Panc1 (cell line): ENCODE measurements at regions of chr11 and their contacts with region 1.

Region 1: GRCh38 chr11:17063171-17064002 is 14.1 kb downstream of the RPS13 start:
- DNase-seq: peak; percentile 28
- ATAC-seq: peak; percentile 96
- H3K4me3 ChIP-seq: no peak overlapping the region
- H3K27ac ChIP-seq: no peak overlapping the region
- H3K4me1 ChIP-seq: no peaks in the 10 kb centered on the region
- H3K27me3 ChIP-seq: no peaks in the 10 kb centered on the region
- CTCF ChIP-seq: peak; percentile 90

Region 2: GRCh38 chr11:16785520-16786128 is 277.8 kb before region 1 on chr11:
- CTCF ChIA-PET with region 1: interaction called, 3 read pairs
- POLR2A ChIA-PET with region 1: no interaction called
- in situ Hi-C with region 1: no loop called
- intact Hi-C with region 1: loop called (anchors 10 kb)
- DNase-seq: no peak
- ATAC-seq: peak; percentile 84
- H3K4me3 ChIP-seq: no peak overlapping the region
- H3K27ac ChIP-seq: no peak overlapping the region
- H3K4me1 ChIP-seq: peaks cover 4% of the 10 kb centered on the region; the same call in 1 of the 2 replicates
- H3K27me3 ChIP-seq: no peaks in the 10 kb centered on the region
- CTCF ChIP-seq: peak; percentile 91

Region 3: DNA sequence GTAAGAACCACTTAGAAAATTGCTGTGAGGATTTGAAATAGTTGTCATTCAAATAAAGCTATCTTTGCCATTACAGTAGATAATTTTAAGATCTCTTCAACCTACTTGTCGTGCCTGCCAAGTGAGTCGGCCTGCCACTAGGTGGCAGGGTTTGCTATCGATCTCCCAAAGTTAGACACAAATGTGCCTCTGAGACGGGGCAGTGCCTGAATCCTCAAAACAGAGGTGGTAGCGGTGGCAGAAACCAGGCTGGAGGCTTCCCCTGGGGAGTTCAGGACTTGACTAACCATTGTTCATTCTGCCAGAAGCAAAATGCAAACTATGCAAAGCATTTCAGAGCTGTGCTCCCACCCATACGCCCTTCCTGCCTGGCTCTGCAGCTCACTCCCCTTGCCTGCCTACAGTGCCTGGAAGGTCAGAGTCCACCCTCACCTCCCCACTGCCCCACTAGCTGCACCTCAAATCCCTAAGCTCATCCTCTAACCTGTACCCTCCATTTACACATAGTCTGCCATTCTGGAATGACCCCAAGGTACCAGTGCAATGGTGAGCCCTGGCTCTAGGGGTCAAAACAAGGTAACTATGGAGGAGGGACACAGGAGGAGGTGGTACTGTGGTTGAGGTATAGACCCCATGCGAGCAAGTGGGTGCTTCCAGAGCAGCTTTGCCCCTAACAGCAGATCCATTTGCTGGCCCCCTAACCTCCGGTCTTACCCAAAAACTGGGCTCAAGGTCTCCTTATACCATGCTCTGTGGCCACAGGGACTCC is 242.9 kb before region 1 on chr11:
- CTCF ChIA-PET with region 1: interaction called, 4 read pairs
- POLR2A ChIA-PET with region 1: no interaction called
- in situ Hi-C with region 1: no loop called
- intact Hi-C with region 1: loop called (anchors 2 kb)
- DNase-seq: peak; percentile 46
- ATAC-seq: peak; percentile 93
- H3K4me3 ChIP-seq: no peak overlapping the region
- H3K27ac ChIP-seq: no peak overlapping the region
- H3K4me1 ChIP-seq: no peaks in the 10 kb centered on the region
- H3K27me3 ChIP-seq: no peaks in the 10 kb centered on the region
- CTCF ChIP-seq: peak; percentile 91

Region 4: DNA sequence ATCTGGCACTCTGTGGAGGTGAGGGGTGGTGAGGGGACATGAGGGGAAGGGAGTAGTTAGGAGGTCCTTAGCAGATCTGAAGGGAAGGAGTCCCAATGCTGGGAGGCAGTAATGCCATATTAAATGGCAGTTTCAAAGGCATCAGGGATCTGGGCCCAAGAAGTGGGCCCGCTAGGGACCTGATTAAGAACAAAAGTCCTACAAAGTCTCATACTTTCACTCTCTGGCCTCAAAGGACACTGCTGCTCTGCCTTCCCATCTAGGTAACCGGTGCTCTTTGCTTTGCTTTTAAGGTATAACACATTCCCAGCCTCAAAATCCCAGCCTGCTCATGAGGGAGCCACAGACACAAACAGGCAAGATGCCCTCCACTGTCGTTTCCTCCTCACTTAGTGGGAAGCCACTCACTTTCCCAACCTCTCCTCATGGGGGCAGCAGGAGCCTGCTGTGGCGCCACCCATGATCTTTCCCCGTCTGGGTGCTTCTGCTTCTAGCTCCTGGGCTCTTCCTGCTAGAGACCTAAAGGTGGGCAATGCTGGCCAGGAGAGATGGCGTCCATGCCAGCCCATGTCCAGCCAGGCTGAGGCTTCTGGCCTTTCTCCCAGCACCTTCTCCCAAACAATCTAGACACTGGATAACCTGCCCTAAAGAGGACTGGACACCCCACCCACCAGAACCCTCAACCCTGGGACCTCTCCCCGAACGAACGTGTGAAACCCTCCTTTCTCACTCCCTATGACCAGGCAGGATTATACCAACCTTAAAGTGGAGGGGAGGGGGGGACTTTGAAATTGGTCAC is 117.5 kb before region 1 on chr11:
- CTCF ChIA-PET with region 1: interaction called, 6 read pairs
- POLR2A ChIA-PET with region 1: no interaction called
- in situ Hi-C with region 1: no loop called
- intact Hi-C with region 1: loop called (anchors 1 kb)
- DNase-seq: peak; percentile 36
- ATAC-seq: peak; percentile 99
- H3K4me3 ChIP-seq: no peak overlapping the region
- H3K27ac ChIP-seq: peak overlapping the region; percentile 42; the same call in 1 of the 2 replicates
- H3K4me1 ChIP-seq: peaks cover 3% of the 10 kb centered on the region; the same call in 1 of the 2 replicates
- H3K27me3 ChIP-seq: no peaks in the 10 kb centered on the region
- CTCF ChIP-seq: peak; percentile 92

Region 5: GRCh38 chr11:17014838-17015626 is 48.4 kb before region 1 on chr11:
- CTCF ChIA-PET with region 1: interaction called, 10 read pairs
- POLR2A ChIA-PET with region 1: no interaction called
- in situ Hi-C with region 1: no loop called
- intact Hi-C with region 1: loop called (anchors 10 kb)
- DNase-seq: no peak
- ATAC-seq: peak; percentile 47
- H3K4me3 ChIP-seq: peak overlapping the region; percentile 52 to 89
- H3K27ac ChIP-seq: peak overlapping the region; percentile 71
- H3K4me1 ChIP-seq: peaks cover 10% of the 10 kb centered on the region; the same call in 1 of the 2 replicates
- H3K27me3 ChIP-seq: no peaks in the 10 kb centered on the region
- CTCF ChIP-seq: peak; percentile 88